Ovary (tissue), 10 donors: ENCODE measurements at regions of chr10 and their contacts with region 1.

Region 1: GRCh38 chr10:100693821-100694220 is 51.6 kb upstream of the PAX2 start:
- DNase-seq: no peak
- H3K4me3 ChIP-seq: no peak overlapping the region
- H3K27ac ChIP-seq: no peak overlapping the region
- H3K4me1 ChIP-seq: no peaks in the 10 kb centered on the region
- H3K27me3 ChIP-seq: no peaks in the 10 kb centered on the region
- CTCF ChIP-seq: no peak
- EP300 ChIP-seq: no peak
- POLR2A ChIP-seq: no peak

Region 2: DNA sequence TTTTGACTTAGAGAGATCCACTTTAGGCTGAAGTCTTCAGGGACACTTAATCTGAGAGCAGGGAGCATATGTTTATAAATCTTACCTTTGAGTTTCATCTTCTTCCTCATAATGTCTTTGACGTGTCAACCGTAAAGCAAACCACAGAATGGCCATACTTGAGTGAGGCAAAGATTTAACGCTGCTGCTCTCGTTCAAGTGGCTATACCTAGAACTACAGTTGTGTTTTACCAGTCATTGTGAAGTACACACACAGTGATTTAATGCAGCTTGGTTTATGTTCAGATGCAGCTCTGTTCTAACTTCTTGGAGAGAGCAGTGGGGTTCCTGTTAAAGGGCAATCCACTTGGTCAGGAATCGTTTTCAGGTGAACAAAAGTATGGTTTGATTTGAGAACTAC is 1223.5 kb before region 1 on chr10:
- intact Hi-C with region 1: no loop called
- DNase-seq: no peak
- H3K4me3 ChIP-seq: no peak overlapping the region
- H3K27ac ChIP-seq: no peak overlapping the region
- H3K4me1 ChIP-seq: peaks cover 4% of the 10 kb centered on the region
- H3K27me3 ChIP-seq: no peaks in the 10 kb centered on the region
- CTCF ChIP-seq: no peak
- EP300 ChIP-seq: no peak
- POLR2A ChIP-seq: no peak

Region 3: GRCh38 chr10:100672199-100672598 is 21.6 kb before region 1 on chr10:
- intact Hi-C with region 1: loop called in 1 of 4 experiments (anchors 1 kb)
- DNase-seq: no peak
- H3K4me3 ChIP-seq: no peak overlapping the region
- H3K27ac ChIP-seq: no peak overlapping the region
- H3K4me1 ChIP-seq: no peaks in the 10 kb centered on the region
- H3K27me3 ChIP-seq: no peaks in the 10 kb centered on the region
- CTCF ChIP-seq: no peak
- EP300 ChIP-seq: no peak
- POLR2A ChIP-seq: no peak